Panc1 (cell line): ENCODE measurements at regions of chrX and their contacts with region 1.

Region 1: DNA sequence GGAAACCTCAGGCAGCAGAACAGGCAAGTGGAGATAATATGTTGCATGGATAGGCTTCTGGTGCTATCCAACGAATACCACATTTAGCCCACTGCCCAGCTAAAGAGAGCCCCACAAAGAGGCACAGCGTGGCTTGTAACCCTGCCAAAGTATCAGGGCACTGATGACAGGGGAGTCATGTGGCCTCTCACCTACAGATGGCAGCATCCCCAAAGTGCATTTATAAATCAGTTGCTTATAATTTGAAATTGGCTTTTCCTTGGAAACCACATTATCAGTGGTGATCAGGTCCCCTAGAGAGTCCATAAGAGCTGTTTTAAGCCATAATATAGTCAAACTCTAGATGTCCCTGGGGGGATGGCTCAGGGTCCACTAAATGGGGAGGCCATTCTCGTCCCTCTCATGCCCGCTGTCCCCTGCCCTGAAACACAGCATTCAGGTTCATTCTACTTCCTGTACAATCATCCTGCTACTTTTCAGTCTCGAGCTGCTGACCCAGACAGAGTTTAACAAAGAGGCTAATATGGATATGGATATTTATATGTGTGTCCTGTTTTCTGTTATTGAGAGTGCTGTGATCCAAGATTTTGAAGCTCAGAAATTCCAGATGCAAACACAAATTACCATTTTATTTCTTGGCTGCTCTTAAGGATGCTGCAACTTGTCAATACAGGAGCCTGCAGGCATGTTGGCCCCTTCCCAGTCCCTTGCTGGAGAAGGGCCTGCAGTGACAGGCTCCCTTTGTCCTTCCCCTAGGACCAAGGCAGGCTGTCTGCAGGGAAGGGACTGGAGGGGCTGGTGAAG is 28.5 kb downstream of the SRPX start:
- DNase-seq: no peak
- ATAC-seq: no peak
- H3K4me3 ChIP-seq: no peak overlapping the region
- H3K27ac ChIP-seq: no peak overlapping the region
- H3K4me1 ChIP-seq: no peaks in the 10 kb centered on the region
- H3K27me3 ChIP-seq: no peaks in the 10 kb centered on the region
- CTCF ChIP-seq: peak; percentile 61

Region 2: GRCh38 chrX:38206036-38206435 is 13.8 kb after region 1 on chrX:
- CTCF ChIA-PET with region 1: no interaction called
- POLR2A ChIA-PET with region 1: no interaction called
- in situ Hi-C with region 1: no loop called
- intact Hi-C with region 1: no loop called
- DNase-seq: no peak
- ATAC-seq: no peak
- H3K4me3 ChIP-seq: no peak overlapping the region
- H3K27ac ChIP-seq: no peak overlapping the region
- H3K4me1 ChIP-seq: no peaks in the 10 kb centered on the region
- H3K27me3 ChIP-seq: no peaks in the 10 kb centered on the region
- CTCF ChIP-seq: no peak

Region 3: DNA sequence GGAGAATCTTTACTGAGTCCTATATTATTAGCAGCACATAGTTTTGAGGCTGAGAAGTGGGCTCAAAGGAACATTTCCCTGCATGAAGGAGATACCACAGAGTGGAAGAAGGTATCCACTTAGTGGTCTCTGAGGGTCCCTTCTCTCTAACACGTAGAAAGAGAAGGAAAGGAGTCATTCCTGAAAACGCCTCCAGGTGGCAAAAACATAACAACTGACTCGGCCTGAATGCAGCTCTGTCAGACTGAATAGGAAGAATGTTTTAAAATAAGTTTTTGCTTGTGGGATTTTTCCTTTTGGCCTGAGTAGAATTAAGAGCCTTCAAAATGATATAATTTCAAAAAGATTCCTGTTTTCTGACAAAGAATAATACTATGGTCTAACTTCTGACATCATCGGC is 111.8 kb after region 1 on chrX:
- CTCF ChIA-PET with region 1: no interaction called
- POLR2A ChIA-PET with region 1: no interaction called
- in situ Hi-C with region 1: no loop called
- intact Hi-C with region 1: loop called (anchors 10 kb)
- DNase-seq: no peak
- ATAC-seq: no peak
- H3K4me3 ChIP-seq: no peak overlapping the region
- H3K27ac ChIP-seq: no peak overlapping the region
- H3K4me1 ChIP-seq: no peaks in the 10 kb centered on the region
- H3K27me3 ChIP-seq: no peaks in the 10 kb centered on the region
- CTCF ChIP-seq: peak; percentile 43; the same call in 1 of the 2 replicates